PC-9 (cell line): ENCODE measurements at regions of chr1 and their contacts with region 1.

Region 1: DNA sequence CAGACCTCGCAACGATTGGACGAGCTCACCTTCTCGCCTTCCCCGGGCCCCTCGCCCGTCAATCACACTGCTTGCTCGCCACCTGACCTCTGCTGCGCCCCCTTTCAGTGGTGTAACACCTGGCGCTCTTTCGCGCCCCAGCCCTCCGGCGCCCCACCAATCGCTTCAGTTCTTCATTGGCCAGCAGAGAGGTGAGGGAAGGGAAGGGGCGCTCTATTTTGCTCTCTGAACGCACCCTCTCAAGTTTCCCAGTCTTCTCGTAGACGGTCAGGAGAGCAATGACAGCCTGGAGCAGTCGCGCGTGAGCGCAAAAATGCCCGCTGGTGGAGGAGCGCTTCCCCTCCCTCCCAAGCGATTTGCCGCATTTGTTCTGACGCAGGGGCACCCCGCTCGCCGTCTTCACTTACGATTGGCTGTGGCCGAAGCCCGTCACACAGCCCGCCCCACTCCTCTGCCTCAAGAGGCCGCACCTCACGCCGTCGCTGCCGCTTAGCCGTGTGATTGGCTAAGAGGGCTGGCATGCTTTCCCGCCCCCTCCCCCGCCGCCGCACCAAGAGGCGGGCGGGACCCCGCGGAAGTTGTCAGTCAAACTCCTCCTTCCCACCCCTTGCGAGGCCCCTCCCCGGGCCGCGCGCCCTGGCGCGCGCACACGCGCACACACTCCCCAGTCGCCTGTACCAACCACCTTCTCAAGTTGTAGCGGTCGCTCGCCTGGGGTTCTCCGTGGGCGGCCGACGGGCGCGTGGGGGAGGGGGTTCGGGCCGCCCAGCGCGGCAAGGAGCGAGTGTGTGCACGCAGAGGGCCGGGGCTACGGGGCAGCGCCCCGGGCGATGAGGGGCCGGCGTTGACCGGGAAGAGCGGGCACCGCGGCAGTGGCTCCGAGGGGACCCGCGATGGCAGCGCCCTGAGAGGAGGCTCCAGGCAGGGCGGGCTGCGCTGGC is at the start of gene PPP2R5A:
- DNase-seq: peak; percentile 96 to 99
- H3K4me3 ChIP-seq: peak within 1 kb of the TSS; percentile 89
- H3K27ac ChIP-seq: peak within 1 kb of the TSS; percentile 70
- H3K4me1 ChIP-seq: peaks cover 37% of the 10 kb centered on the region
- H3K27me3 ChIP-seq: no peaks in the 10 kb centered on the region
- CTCF ChIP-seq: no peak; the same call in 1 of the 2 replicates
- total RNA-seq, gene PPP2R5A: 22.8 and 26.7 TPM in 2 replicates

Region 2: DNA sequence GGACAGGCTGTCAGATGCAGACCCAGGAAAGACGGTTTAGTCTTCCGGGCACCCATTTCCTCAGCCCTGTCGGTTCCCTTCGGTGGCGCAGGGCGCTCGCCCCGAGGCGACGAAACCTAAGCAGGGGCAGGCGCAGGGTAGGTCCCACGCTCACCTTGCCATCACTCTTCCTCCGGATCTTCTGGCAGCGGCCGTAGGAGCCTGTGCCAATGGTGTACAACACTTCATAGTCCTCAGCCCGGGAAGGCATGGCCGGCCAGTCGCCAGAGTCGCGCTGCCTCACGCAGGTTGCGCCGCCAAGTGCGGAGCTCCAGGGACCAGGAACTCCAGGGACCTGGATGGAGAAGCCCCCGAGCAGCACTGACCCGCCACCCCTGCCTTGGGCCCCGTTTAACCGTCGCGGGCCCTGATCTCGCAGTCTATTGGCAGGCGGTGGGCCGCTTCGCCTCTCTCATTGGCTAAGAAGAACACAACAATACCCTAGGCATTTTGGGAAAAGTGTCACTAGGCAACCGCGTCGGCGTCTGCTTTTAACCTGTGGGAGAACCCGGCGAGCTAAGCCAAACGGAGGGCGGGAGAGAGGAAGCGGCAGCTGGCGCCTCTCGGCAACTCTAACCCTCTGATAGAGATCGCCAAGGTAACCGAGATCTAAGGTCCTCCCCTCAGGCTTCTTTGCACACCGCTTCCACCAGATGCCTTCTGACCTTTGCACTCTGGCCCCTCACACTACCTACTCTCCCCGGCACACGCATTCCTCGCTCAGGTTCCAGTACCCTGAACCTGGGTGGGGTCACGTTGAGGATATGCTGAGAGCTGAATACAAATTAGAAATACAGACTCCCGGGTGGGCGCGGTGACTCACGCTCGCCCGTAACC is 609.5 kb before region 1 on chr1 and contains the start of gene NEK2:
- CTCF ChIA-PET with region 1: no interaction called
- POLR2A ChIA-PET with region 1: no interaction called
- intact Hi-C with region 1: loop called (anchors 5 kb)
- DNase-seq: peak; percentile 93 to 97
- H3K4me3 ChIP-seq: peak within 1 kb of the TSS; percentile 81
- H3K27ac ChIP-seq: peak within 1 kb of the TSS; percentile 57
- H3K4me1 ChIP-seq: peaks cover 30% of the 10 kb centered on the region
- H3K27me3 ChIP-seq: no peaks in the 10 kb centered on the region
- CTCF ChIP-seq: no peak
- total RNA-seq, gene NEK2: 56.0 and 60.5 TPM in 2 replicates

Region 3: DNA sequence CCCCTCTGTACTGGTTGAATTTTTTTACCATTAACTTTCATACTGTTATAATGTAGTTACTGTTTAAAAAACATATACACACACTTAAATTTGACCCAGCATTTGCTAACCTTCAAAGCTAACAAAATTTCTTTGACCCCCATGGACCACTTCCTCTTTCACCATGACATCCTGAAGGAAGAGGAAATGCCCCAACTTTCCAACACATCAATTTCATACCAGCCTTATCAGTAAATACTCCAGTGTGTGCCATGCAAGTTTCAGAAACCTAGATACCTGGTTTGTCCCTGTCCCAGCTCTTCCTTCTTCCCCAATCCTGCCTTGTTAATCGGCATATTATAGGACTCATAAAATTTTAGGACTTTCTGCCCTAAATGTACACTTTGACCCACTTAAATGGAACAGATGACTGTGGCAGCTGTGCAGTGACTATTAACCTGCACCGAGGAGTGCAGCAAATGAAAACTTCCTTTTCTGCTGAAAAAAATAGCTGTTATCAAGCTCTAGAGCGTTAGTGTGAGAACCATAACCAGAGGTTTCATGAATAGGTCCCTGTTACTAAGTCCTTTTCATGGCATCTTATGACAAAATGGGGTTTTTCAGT is 195.4 kb before region 1 on chr1:
- CTCF ChIA-PET with region 1: interaction called, 3 read pairs
- POLR2A ChIA-PET with region 1: no interaction called
- intact Hi-C with region 1: loop called (anchors 2 kb)
- DNase-seq: no peak
- H3K4me3 ChIP-seq: no peak overlapping the region
- H3K27ac ChIP-seq: no peak overlapping the region
- H3K4me1 ChIP-seq: no peaks in the 10 kb centered on the region
- H3K27me3 ChIP-seq: no peaks in the 10 kb centered on the region
- CTCF ChIP-seq: no peak

Region 4: DNA sequence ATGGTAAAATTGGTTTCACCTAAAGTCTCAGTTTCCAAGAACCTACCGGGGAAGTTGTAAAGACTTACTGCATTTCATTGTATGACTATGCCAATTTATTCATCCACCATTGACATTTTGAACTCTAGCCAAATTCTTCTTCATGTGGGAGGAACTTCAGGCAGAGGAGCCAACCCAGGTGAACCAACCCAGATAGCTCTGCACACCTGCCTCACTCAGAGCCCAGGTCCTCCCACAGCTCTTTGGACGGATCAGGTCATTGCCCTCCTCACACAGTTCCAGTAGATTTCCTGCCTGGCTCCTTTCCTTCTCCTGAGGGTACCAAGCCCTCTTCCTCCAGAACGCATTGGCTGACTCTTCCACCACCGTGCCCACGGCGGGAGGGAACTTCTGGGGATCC is 127.8 kb before region 1 on chr1:
- CTCF ChIA-PET with region 1: no interaction called
- POLR2A ChIA-PET with region 1: interaction called, 10 read pairs
- intact Hi-C with region 1: no loop called
- DNase-seq: no peak
- H3K4me3 ChIP-seq: no peak overlapping the region
- H3K27ac ChIP-seq: no peak overlapping the region
- H3K4me1 ChIP-seq: no peaks in the 10 kb centered on the region; the same call in 1 of the 2 replicates
- H3K27me3 ChIP-seq: no peaks in the 10 kb centered on the region
- CTCF ChIP-seq: no peak

Region 5: DNA sequence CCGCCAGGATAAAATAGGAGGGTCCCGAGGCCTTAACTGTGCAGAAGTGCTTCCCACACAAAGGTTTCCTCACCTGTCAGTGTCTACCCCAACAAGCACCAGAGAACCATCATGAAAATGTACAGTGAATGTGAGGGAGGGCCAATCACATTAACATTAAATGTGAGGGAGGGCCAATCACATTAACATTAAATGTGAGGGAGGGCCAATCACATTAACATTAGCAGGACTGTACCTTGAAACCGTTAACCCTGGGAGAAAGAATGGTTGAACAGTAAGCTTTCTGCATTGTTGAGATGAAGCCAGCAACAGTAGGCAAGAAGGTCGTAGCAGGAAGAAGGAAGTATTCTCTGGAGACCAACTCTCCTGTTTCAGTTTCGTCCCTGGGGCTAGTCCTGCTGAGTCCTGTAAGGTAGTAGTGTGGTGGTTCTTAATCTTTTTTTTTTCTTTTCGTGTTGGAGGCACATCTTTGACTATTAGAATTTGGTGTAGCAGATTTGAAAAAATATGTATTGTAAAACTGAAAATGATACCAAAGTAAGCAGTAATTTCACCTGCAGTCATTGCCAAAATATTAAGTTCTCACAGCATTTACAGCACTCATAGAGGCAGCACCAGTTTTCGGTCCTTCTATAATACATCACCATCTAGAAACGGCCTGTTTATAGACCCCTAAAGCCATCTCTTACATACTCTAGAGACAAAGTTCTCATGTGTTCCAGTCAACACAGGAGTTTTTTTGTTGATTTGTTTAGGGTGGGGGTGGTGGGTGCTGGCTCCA is 98.4 kb before region 1 on chr1:
- CTCF ChIA-PET with region 1: no interaction called
- POLR2A ChIA-PET with region 1: no interaction called
- intact Hi-C with region 1: loop called (anchors 10 kb)
- DNase-seq: no peak
- H3K4me3 ChIP-seq: no peak overlapping the region
- H3K27ac ChIP-seq: no peak overlapping the region
- H3K4me1 ChIP-seq: no peaks in the 10 kb centered on the region
- H3K27me3 ChIP-seq: no peaks in the 10 kb centered on the region
- CTCF ChIP-seq: no peak

Region 6: GRCh38 chr1:212234431-212235395 is 50.3 kb before region 1 on chr1:
- CTCF ChIA-PET with region 1: interaction called, 3 read pairs
- POLR2A ChIA-PET with region 1: no interaction called
- intact Hi-C with region 1: loop called (anchors 2 kb)
- DNase-seq: peak; percentile 53 to 80
- H3K4me3 ChIP-seq: no peak overlapping the region
- H3K27ac ChIP-seq: peak overlapping the region; percentile 69
- H3K4me1 ChIP-seq: peaks cover 32% of the 10 kb centered on the region
- H3K27me3 ChIP-seq: no peaks in the 10 kb centered on the region
- CTCF ChIP-seq: no peak

Region 7: GRCh38 chr1:212256369-212256768 is 28.6 kb before region 1 on chr1:
- CTCF ChIA-PET with region 1: no interaction called
- POLR2A ChIA-PET with region 1: no interaction called
- intact Hi-C with region 1: loop called (anchors 1 kb)
- DNase-seq: no peak
- H3K4me3 ChIP-seq: no peak overlapping the region
- H3K27ac ChIP-seq: no peak overlapping the region
- H3K4me1 ChIP-seq: peaks cover 13% of the 10 kb centered on the region
- H3K27me3 ChIP-seq: no peaks in the 10 kb centered on the region
- CTCF ChIP-seq: no peak

Region 8: DNA sequence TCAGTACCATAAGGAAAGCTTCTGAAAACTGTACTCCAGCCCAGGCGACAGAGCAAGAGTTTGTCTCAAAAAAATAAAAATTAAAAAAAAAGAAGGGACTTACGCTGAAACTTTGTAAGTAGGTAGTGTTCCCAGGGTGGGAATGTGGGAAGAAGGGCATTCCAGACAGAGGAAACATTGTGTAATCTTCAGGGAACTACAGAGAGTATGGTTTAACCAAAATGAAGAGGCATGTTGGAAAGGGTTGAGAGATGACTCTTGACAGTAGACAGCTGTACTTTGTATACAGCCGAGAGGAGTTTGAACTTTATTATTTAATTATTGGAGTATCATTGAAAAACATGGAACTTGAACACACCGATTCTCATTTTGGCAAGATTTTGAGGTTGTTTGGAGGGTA is 43.2 kb after region 1 on chr1:
- CTCF ChIA-PET with region 1: no interaction called
- POLR2A ChIA-PET with region 1: no interaction called
- intact Hi-C with region 1: no loop called
- DNase-seq: no peak
- H3K4me3 ChIP-seq: no peak overlapping the region
- H3K27ac ChIP-seq: no peak overlapping the region
- H3K4me1 ChIP-seq: no peaks in the 10 kb centered on the region
- H3K27me3 ChIP-seq: no peaks in the 10 kb centered on the region
- CTCF ChIP-seq: no peak